ENCODE measurements at regions of chr10 and their contacts with region 1.

Region 1: DNA sequence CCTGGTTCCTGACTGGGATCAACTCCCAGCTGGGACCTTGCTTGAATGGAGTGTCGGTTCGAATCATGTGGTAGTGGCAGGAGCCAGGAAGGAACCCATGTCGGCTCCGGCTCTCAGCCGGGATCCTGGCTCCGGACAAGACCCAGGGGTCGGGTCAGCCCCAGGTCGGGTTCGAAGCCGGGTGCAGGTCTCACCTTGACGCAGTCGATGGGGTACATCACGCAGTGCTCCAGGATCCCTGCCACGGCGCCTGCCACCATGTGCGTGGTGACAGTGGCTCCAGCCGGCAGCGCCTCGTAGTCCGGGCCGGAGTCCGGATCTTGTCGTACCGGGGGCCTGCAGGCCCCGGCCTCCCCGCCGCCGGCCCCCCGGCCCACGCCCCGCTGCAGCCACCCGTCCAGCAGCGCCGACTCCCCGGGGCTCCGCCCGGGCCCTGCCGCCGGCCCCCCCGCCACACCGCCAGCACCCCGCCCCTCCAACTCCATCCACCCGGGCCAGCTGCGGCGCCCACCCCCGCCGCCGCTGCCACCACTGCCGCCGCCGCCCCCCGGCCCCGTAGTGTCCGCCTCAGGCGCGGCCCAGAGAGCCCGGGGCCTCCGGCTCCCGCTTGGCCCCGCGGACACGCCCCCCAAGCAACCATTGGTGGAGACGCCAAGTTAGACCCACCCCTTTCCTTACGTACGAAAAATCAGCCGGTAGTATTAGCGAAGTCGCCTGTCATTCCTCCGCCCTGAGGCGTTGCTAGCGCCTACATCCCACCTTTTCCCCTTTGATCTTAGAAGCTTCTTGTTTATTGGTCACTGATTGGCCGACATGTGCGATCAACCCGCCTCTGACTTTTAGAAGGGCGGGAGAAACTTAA is at the start of gene SLC25A28:
- DNase-seq: peak in 1 of 2 donors; percentile 93
- H3K4me3 ChIP-seq: peak within 1 kb of the TSS; percentile 66 to 97 (median 94)
- H3K27ac ChIP-seq: peak within 1 kb of the TSS; percentile 95 to 100 (median 99)
- H3K4me1 ChIP-seq: peaks cover 31 to 57% (median 44%) of the 10 kb centered on the region in 4 donors
- H3K27me3 ChIP-seq: no peaks in the 10 kb centered on the region
- CTCF ChIP-seq: no peak
- EP300 ChIP-seq: no peak
- POLR2A ChIP-seq: no peak
- total RNA-seq, gene SLC25A28: 7.5 to 225 (median 43.5) TPM

Region 2: DNA sequence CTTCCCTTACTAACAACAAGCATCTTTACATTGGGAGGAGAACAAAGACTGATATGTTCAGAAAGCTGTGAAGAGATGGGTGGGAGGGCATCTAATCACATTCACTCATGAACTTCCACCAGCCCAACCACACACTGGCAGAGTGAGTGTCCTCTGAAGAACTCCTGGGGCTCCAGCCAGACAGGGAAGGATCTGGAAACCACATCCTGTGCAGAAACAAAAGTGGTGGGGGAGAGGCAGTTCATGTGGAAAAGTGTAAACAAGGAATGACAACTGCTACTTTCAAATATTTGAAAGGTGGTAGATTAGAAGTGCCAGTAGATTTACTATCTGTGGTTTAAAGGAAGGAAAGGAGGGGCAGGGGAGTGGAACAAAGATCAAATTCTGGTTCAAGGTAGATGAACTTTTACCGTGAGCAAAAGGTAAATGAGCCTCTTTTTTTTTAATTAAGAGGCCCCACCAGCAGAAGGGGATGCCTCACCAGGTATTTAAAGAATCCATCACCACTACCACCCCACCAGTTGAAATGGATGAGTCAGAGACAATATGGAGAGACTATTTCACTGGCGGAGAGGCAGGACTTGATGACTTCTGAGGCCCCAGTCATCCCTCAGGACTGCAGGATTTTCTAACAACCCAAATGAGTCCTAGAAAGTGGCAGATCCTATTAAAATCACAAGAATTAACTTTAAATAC is 224.2 kb before region 1 on chr10:
- intact Hi-C with region 1: loop called (anchors 10 kb)
- DNase-seq: no peak
- H3K4me3 ChIP-seq: no peak overlapping the region
- H3K27ac ChIP-seq: no peak overlapping the region
- H3K4me1 ChIP-seq: peaks cover 0 to 24% (median 12%) of the 10 kb centered on the region in 4 donors
- H3K27me3 ChIP-seq: no peaks in the 10 kb centered on the region
- CTCF ChIP-seq: no peak
- EP300 ChIP-seq: no peak
- POLR2A ChIP-seq: no peak

Measured in stomach (tissue), 19 donors.